MCF 10A (cell line): ENCODE measurements at regions of chr4 and their contacts with region 1.

Region 1: DNA sequence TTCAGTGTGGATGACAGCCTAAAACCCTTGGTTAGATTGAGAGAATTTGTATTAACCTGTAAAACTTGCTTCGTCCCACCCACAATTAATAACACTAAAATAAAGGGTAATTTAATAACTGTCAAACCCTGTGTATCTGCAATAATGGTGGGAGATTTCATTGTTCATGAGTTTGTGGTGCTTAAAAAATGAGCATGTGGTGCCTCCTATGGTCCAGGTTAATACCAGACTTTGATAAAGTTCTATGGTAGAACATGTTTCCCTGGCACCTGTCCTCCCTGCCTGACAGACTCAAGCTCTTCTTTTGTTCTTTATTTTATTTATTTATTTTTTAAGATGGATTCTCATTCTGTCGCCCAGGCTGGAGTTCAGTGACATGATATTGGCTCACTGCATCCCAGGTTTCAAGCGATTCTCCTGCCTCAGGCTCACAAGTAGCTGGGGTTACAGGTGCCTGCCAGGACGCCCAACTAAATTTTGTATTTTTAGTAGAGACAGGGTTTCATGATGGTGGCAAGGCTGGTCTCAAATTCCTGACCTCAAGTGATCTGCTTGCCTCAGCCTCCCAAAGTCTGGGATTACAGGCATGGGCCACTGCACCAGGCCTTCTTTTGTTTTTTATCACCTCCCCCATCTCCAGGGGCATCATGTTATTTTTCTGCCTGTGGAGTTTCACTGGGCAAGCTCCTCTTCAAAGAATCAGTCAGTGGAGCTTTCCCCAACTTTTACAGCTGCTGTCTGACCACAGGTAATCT is 289.2 kb downstream of the NR3C2 start:
- DNase-seq: peak; percentile 6
- H3K4me3 Mint-ChIP-seq: no peak overlapping the region
- H3K27ac Mint-ChIP-seq: no peak overlapping the region
- H3K4me1 Mint-ChIP-seq: no peaks in the 10 kb centered on the region
- H3K27me3 Mint-ChIP-seq: no peaks in the 10 kb centered on the region
- CTCF ChIP-seq: peak; percentile 20

Region 2: DNA sequence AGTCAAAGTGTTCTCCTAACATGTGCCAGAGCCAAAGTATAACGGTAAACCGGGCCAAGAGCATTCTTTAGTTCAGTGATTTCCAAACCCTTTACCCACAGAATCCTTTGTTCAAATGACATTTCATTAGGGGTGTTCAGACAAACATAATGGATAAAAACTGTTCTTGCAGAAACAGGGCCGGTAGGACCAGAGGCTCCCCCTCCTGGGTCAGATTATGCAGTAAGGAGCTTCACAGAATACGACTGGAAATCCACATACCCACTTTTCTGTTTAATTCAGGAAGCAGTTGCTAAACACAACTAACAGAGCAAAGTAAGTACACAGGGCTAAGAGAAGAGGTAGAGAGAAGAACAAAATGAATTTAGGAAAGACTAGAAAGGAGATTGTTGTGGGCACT is 582.4 kb before region 1 on chr4:
- CTCF ChIA-PET with region 1: no interaction called
- POLR2A ChIA-PET with region 1: no interaction called
- intact Hi-C with region 1: no loop called
- DNase-seq: no peak
- H3K4me3 Mint-ChIP-seq: no peak overlapping the region
- H3K27ac Mint-ChIP-seq: no peak overlapping the region
- H3K4me1 Mint-ChIP-seq: no peaks in the 10 kb centered on the region
- H3K27me3 Mint-ChIP-seq: no peaks in the 10 kb centered on the region
- CTCF ChIP-seq: no peak

Region 3: GRCh38 chr4:147866532-147867271 is 286.3 kb before region 1 on chr4:
- CTCF ChIA-PET with region 1: no interaction called
- POLR2A ChIA-PET with region 1: no interaction called
- intact Hi-C with region 1: no loop called
- DNase-seq: peak; percentile 93
- H3K4me3 Mint-ChIP-seq: no peak overlapping the region
- H3K27ac Mint-ChIP-seq: peak overlapping the region; percentile 75
- H3K4me1 Mint-ChIP-seq: no peaks in the 10 kb centered on the region
- H3K27me3 Mint-ChIP-seq: no peaks in the 10 kb centered on the region
- CTCF ChIP-seq: peak; percentile 98

Region 4: DNA sequence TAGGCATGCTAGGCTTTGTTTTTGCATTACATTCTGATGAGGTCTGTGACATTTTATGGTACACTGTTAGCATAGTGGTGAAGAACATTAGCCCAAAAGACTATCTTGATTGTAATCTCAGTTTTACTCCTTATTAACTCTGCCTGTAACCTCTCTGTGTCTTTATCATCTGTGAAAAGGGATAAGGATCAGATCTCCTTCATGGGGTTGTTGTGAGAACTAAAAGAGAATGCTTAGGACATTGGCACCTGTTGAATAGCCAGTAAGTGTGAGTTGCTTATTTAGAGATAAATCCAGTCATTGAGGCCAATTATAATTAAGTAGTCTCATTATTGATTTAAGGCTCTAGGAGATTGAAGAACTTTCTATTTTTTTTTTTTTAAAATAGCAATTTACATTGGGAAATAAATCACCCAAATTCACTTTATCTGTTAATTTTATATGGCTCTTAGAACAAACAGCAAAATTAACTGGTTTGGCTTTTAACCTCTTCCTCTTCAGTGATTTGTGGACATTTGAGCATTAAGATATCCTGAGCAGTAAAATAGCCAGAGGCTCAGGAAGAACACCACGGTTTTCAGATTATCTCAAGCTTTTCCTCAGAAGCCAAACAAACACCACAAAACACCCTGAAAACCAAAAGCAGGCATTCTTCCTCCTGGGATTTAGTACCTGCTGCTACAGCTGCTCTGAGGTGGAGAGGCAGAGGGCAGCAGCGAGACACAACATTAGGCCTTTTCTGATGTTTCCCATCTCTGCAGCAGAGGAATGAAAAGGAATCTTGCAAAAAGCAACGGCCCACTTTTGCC is 228.2 kb before region 1 on chr4:
- CTCF ChIA-PET with region 1: no interaction called
- POLR2A ChIA-PET with region 1: no interaction called
- intact Hi-C with region 1: loop called (anchors 1 kb)
- DNase-seq: peak; percentile 40
- H3K4me3 Mint-ChIP-seq: no peak overlapping the region
- H3K27ac Mint-ChIP-seq: no peak overlapping the region
- H3K4me1 Mint-ChIP-seq: no peaks in the 10 kb centered on the region
- H3K27me3 Mint-ChIP-seq: no peaks in the 10 kb centered on the region
- CTCF ChIP-seq: peak; percentile 36

Region 5: GRCh38 chr4:147984065-147984777 is 168.8 kb before region 1 on chr4:
- CTCF ChIA-PET with region 1: no interaction called
- POLR2A ChIA-PET with region 1: no interaction called
- intact Hi-C with region 1: loop called (anchors 5 kb)
- DNase-seq: peak; percentile 59
- H3K4me3 Mint-ChIP-seq: no peak overlapping the region
- H3K27ac Mint-ChIP-seq: no peak overlapping the region
- H3K4me1 Mint-ChIP-seq: peaks cover 6% of the 10 kb centered on the region
- H3K27me3 Mint-ChIP-seq: no peaks in the 10 kb centered on the region
- CTCF ChIP-seq: peak; percentile 79